Endothelial cell of umbilical vein (primary cell): ENCODE measurements at regions of chr14 and their contacts with region 1.

Region 1: DNA sequence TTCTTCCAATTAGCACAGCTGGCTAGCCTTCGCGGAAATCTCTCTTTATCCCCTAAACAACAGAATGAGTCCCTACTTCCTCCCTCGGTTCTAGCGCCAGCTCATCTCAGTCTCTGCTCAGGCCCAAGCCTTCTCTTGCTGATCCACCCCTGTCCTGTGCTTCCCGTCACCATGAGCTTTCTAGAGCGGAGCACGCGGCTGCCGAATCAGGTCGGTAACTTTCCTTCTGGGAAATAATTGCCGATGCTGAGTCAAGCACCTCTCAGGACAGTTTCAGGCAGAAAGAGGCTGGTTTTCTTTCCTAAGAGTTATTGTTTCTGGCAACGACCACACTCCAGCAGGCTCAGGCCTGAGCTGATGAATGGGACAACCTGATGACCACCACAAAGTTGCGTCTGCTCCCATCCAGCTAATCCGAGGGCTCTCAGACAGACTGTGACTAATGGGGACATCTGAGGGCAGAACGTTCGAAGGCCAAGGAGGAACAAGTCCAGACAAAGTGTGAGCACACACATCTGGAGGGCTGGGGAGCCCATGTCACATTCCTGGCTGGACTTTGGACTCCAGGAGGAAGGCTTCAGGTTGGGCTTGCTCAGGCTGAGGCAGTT is 13.6 kb upstream of the GPR68 start:
- DNase-seq: peak; percentile 59
- H3K4me3 ChIP-seq: no peak overlapping the region
- H3K27ac ChIP-seq: no peak overlapping the region
- H3K4me1 ChIP-seq: peaks cover 7% of the 10 kb centered on the region
- H3K27me3 ChIP-seq: no peaks in the 10 kb centered on the region
- CTCF ChIP-seq: no peak
- POLR2A ChIP-seq: no peak

Region 2: GRCh38 chr14:91244501-91244901 is 13.6 kb before region 1 on chr14 and contains the start of gene GPR68:
- CTCF ChIA-PET with region 1: interaction called, 11 read pairs
- POLR2A ChIA-PET with region 1: interaction called, 8 read pairs
- dilution Hi-C with region 1: no loop called
- intact Hi-C with region 1: loop called (anchors 1 kb)
- DNase-seq: no peak
- H3K4me3 ChIP-seq: no peak within 1 kb of the TSS
- H3K27ac ChIP-seq: peak within 1 kb of the TSS; percentile 51
- H3K4me1 ChIP-seq: peaks cover 19% of the 10 kb centered on the region
- H3K27me3 ChIP-seq: no peaks in the 10 kb centered on the region
- CTCF ChIP-seq: no peak
- POLR2A ChIP-seq: no peak
- total RNA-seq, gene GPR68: 0.24 and 0.51 TPM in 2 replicates